Sigmoid colon (tissue), 7 donors: ENCODE measurements at regions of chr1 and their contacts with region 1.

Region 1: DNA sequence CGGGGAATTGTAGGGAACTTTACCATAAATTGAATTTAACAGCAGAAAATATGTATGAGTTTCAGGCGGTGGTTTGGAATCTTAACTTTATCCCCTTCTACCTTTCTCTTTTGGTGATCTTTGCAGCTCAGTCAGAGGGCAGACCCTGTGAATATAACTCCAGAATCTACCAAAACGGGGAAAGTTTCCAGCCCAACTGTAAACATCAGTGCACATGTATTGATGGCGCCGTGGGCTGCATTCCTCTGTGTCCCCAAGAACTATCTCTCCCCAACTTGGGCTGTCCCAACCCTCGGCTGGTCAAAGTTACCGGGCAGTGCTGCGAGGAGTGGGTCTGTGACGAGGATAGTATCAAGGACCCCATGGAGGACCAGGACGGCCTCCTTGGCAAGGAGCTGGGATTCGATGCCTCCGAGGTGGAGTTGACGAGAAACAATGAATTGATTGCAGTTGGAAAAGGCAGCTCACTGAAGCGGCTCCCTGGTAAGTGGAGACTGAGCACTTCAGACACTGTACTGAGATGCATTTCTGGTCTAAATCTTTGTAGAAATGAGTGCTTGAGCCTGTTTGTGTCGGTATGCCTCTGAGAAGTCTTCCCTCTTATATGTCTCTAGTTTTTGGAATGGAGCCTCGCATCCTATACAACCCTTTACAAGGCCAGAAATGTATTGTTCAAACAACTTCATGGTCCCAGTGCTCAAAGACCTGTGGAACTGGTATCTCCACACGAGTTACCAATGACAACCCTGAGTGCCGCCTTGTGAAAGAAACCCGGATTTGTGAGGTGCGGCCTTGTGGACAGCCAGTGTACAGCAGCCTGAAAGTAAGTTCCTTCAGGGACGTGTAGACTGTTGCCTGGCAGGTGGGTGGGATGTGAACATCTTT is 1.5 kb downstream of the CCN1 start:
- DNase-seq: peak; percentile 79
- H3K4me3 ChIP-seq: peak overlapping the region; percentile 61 to 87 (median 77)
- H3K27ac ChIP-seq: peak overlapping the region; percentile 96 to 99 (median 98)
- H3K4me1 ChIP-seq: peaks cover 0 to 65% (median 52%) of the 10 kb centered on the region in 4 donors
- H3K27me3 ChIP-seq: no peaks in the 10 kb centered on the region
- CTCF ChIP-seq: peak; percentile 30 to 79 (median 49)
- EP300 ChIP-seq: no peak
- POLR2A ChIP-seq: no peak

Region 2: DNA sequence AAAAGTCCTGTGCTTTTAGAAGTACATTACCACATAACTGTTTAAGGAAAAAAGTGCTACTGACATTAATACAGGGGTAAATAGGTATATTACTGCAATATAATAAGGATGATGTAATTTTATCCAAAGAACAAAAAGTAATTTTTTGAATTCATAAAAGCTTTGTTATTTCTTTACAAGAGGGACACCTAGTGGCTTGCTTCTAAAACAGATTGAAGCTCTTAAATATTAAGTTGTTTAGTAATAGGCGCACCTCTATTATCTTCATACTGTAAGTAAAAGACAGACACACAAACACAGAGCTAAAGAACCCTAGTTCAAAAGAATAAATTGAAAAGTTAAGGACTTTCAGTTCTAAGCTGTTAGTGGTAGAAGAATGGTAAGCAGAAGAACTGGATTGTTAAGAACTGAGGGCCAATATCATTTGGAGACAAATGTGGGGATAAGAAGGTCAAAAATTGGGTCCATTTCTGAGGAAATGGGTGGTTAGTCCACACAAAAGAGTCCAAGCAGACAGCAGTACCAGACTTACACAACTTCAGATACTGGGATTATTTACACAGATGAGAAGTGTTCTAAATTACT is 110.8 kb after region 1 on chr1:
- intact Hi-C with region 1: loop called (anchors 2 kb)
- DNase-seq: no peak
- H3K4me3 ChIP-seq: no peak overlapping the region
- H3K27ac ChIP-seq: no peak overlapping the region
- H3K4me1 ChIP-seq: peaks cover 0 to 4% (median 0%) of the 10 kb centered on the region in 4 donors
- H3K27me3 ChIP-seq: no peaks in the 10 kb centered on the region
- CTCF ChIP-seq: peak in 3 of 4 experiments; percentile 38 to 49 (median 41)
- EP300 ChIP-seq: no peak
- POLR2A ChIP-seq: no peak